AG04450 (cell line): ENCODE measurements at regions of chr1 and their contacts with region 1.

Region 1: DNA sequence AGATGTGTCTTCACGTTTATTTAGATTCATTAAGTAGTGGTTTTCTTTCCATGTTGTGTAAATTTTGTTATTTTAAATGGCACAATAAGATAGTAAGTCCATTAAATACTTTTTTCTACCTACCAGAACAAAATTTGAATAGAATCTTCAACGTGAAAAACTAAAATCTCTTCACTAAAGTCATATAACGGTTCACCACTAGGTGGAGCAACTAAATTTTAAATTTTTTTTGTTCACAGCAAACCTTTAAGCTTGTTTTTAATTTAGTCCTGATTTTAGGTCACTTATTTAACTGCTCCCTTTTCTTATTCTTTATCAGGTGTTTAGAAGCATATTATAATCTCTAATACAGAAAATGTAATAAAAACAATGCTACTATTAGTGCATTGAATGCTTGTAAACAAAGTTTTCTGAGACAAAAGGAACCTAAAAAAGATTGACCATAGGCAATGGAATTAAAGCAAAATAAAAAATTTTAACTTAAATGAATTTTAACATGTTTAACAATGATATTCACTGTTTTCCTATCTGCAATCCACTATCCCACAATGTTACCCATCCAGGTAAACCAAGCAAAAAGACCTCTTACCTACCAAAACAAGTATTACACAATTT is 28.3 kb upstream of the PKN2 start:
- DNase-seq: no peak
- H3K4me3 ChIP-seq: no peak overlapping the region
- H3K27ac ChIP-seq: no peak overlapping the region
- H3K27me3 ChIP-seq: peaks cover 3% of the 10 kb centered on the region
- CTCF ChIP-seq: peak; percentile 58

Region 2: DNA sequence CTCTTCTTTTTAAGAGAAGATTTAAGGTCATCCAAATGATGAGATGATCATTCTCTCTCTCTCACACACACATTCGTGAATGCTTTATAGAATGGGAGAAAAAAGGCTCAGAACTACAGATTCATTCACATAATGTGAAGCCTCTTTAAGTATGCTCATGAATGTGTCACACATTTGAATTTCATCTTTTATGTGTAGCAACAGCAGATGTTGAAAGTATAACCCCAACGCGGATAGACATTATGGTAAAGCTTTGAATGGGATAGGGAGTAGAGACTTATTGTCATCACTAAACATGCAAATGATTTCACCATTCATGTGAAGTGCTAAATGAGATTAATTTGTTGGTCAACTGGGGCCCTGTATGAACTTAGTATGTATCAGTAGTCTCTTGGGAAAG is 12.6 kb after region 1 on chr1:
- CTCF ChIA-PET with region 1: interaction called, 12 read pairs
- POLR2A ChIA-PET with region 1: no interaction called
- DNase-seq: no peak
- H3K4me3 ChIP-seq: no peak overlapping the region
- H3K27ac ChIP-seq: no peak overlapping the region
- H3K27me3 ChIP-seq: no peaks in the 10 kb centered on the region
- CTCF ChIP-seq: no peak

Region 3: GRCh38 chr1:88730132-88730675 is 74.4 kb after region 1 on chr1:
- CTCF ChIA-PET with region 1: no interaction called
- POLR2A ChIA-PET with region 1: no interaction called
- DNase-seq: no peak
- H3K4me3 ChIP-seq: no peak overlapping the region
- H3K27ac ChIP-seq: no peak overlapping the region
- H3K27me3 ChIP-seq: no peaks in the 10 kb centered on the region
- CTCF ChIP-seq: no peak